IMR-90 (cell line): ENCODE measurements at regions of chr18 and their contacts with region 1.

Region 1: GRCh38 chr18:50218432-50219197 is 23.7 kb upstream of the MYO5B start:
- DNase-seq: peak; percentile 14
- ATAC-seq: peak; percentile 29; the same call in 1 of the 2 replicates
- H3K4me3 ChIP-seq: no peak overlapping the region
- H3K27ac ChIP-seq: no peak overlapping the region
- H3K4me1 ChIP-seq: no peaks in the 10 kb centered on the region
- H3K27me3 ChIP-seq: 0 out of 2 replicates have a peak, but pooled peaks cover 2% of the 10 kb centered on the region
- CTCF ChIP-seq: peak; percentile 21; the same call in 1 of the 2 replicates
- POLR2A ChIP-seq: no peak
- RAD21 ChIP-seq: peak; percentile 28; the same call in 1 of the 2 replicates

Region 2: DNA sequence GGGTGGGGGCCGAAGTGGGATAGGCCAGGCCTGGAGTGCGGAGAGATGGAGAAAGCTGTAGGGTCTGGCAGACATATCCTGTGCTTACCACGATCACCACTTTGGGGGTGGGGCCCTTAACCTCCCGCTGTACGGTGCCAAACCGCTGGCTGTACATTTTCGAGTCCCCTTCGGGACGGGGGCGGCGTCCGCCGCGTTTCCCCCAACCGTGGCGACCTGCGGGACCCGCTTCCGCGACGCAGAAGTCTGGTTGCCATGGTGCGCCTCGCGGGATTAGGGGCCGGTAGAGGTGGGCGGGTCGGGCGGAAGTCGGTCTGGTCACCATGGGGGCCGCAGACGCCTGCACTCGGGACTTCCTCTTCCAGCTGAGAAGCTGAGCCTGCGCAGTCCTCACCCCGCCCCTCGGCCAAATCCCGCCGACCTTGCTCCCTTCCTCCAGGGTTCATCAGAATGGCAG is 47.7 kb after region 1 on chr18 and contains the start of gene CFAP53:
- CTCF ChIA-PET with region 1: no interaction called
- POLR2A ChIA-PET with region 1: no interaction called
- dilution Hi-C with region 1: no loop called
- in situ Hi-C with region 1: no loop called
- intact Hi-C with region 1: no loop called
- DNase-seq: peak; percentile 84
- ATAC-seq: peak; percentile 100
- H3K4me3 ChIP-seq: peak within 1 kb of the TSS; percentile 84
- H3K27ac ChIP-seq: peak within 1 kb of the TSS; percentile 21; the same call in 1 of the 2 replicates
- H3K4me1 ChIP-seq: no peaks in the 10 kb centered on the region
- H3K27me3 ChIP-seq: no peaks in the 10 kb centered on the region
- CTCF ChIP-seq: no peak
- POLR2A ChIP-seq: peak; percentile 21; the same call in 1 of the 2 replicates
- RAD21 ChIP-seq: no peak
- total RNA-seq, gene CFAP53: under 0.01 TPM in 2 replicates

Region 3: GRCh38 chr18:50429207-50429948 is 210.8 kb after region 1 on chr18:
- CTCF ChIA-PET with region 1: no interaction called
- POLR2A ChIA-PET with region 1: no interaction called
- dilution Hi-C with region 1: no loop called
- in situ Hi-C with region 1: no loop called
- intact Hi-C with region 1: loop called (anchors 2 kb)
- DNase-seq: peak; percentile 12
- ATAC-seq: peak; percentile 61
- H3K4me3 ChIP-seq: no peak overlapping the region
- H3K27ac ChIP-seq: no peak overlapping the region
- H3K4me1 ChIP-seq: no peaks in the 10 kb centered on the region
- H3K27me3 ChIP-seq: peaks cover 3% of the 10 kb centered on the region; the same call in 1 of the 2 replicates
- CTCF ChIP-seq: peak; percentile 46
- POLR2A ChIP-seq: no peak
- RAD21 ChIP-seq: peak; percentile 26